ENCODE measurements at regions of chr5 and their contacts with region 1.

Region 1: DNA sequence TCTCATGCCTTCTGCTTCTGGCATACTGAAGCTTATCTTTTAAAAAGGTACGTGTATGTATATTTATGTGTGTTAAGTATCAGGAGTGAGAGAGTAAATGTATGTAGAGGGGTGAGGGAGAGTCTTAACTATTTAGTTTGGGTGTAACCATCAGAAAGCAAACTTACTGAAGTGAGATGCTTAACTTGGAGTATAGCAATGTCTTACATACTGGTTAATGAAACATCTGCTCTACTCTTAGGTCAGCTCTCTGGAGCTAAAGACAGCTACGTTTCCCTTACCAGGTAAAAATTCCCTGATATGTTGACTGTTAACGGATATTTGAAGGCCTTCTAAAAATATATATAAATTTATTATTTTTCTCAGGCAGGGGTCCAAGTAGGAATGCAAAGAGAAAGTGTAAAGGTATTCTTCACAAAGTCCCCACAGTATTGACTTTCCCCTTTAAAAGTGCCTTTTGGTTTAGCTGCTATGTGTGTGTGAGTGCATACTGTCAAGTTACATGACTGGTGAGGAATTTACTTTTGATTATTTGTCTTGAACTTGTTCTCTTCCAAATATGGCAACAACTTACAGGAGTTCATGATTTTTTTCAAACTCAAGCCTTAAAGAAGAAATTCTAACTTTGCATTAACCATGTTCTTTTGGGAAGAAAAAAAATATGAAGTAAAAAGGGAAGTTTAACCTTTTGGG is 12.3 kb upstream of the C5orf24 start:
- DNase-seq: no peak

Region 2: DNA sequence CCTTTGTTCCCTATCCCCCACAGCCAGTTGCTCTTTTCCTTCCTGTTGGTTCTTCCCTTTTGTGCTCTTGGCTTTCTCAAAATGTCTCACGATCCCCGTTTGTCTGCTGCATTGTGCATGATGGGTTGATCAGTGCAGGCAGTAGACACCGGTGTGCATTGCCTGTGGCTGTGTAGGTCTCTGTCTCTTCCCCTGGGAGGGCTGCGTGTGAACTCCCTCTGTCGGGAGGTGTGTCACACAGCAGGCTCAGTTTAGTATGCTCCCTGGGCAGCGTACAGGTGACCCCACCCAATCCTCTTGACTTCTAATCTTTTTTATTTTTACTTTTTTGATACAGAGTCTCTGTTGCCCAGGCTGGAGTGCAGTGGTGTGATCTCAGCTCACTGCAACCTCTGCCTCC is 1486.4 kb before region 1 on chr5:
- intact Hi-C with region 1: no loop called
- DNase-seq: peak; percentile 16

Region 3: GRCh38 chr5:134794082-134794481 is 39.4 kb before region 1 on chr5:
- intact Hi-C with region 1: no loop called
- DNase-seq: no peak

Region 4: GRCh38 chr5:134893748-134894505 is 60.4 kb after region 1 on chr5:
- intact Hi-C with region 1: loop called in 1 of 2 experiments (anchors 2 kb)
- DNase-seq: no peak

Measured in posterior vena cava (tissue), 2 donors.